SK-N-SH (cell line): ENCODE measurements at regions of chr17 and their contacts with region 1.

Region 1: DNA sequence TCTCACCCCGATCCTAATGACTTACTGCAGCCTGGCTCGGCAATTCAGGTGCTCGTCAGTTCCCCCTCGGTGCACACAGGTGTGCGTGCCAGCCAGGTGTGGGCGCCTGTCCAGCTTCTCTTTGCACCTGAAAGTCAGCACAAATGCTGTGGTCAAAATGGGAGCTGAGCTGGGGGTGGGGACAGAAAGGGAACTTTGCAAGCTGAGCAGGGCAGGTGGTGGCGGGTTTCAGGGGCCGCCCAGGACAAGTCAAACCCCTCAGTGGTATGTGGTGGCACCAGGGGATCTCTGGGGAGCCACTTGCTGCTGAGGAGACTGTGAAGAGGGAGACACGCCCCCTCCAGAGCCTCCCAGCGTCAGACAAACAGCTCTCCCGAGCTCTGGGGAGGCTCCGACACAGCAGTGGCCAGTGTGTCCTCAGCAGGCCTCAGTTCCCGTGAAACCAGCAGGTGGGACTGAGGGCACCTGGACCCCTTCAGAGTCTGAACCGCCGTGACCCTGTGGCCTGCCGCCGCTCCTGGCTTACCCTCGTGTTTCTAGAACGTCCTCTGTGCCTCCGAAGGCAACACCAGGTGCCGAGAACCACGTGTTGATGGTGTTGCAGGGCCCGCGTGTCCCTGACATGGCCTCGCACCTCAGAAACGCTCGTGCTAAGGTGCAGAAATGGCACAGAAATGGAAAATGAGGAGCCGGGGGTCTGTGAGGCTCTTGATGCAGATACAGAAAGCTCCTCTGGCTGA is 233.5 kb upstream of the TNRC6C start:
- DNase-seq: no peak
- H3K4me3 ChIP-seq: no peak overlapping the region
- H3K27ac ChIP-seq: no peak overlapping the region
- H3K4me1 ChIP-seq: peaks cover 0 to 52% of the 10 kb centered on the region in 2 experiments; a peak in 1 of 4 replicates
- H3K27me3 ChIP-seq: peaks cover 8% of the 10 kb centered on the region; the same call in 1 of the 2 replicates
- CTCF ChIP-seq: no peak
- EP300 ChIP-seq: no peak
- RAD21 ChIP-seq: no peak

Region 2: GRCh38 chr17:77690271-77691161 is 34.5 kb before region 1 on chr17:
- CTCF ChIA-PET with region 1: interaction called, 14 read pairs
- POLR2A ChIA-PET with region 1: no interaction called
- DNase-seq: peak; percentile 88
- H3K4me3 ChIP-seq: peak overlapping the region in 1 of 2 experiments; percentile 12; a peak in 1 of 4 replicates
- H3K27ac ChIP-seq: peak overlapping the region in 1 of 2 experiments; percentile 93; a peak in 2 of 4 replicates
- H3K4me1 ChIP-seq: peaks cover 0 to 33% of the 10 kb centered on the region in 2 experiments; a peak in 1 of 4 replicates
- H3K27me3 ChIP-seq: peaks cover 48% of the 10 kb centered on the region; the same call in 1 of the 2 replicates
- CTCF ChIP-seq: no peak
- EP300 ChIP-seq: peak in 1 of 2 experiments; percentile 75; a peak in 2 of 4 replicates
- RAD21 ChIP-seq: peak; percentile 8; the same call in 1 of the 2 replicates

Region 3: GRCh38 chr17:77708936-77709335 is 16.1 kb before region 1 on chr17:
- CTCF ChIA-PET with region 1: interaction called, 15 read pairs
- POLR2A ChIA-PET with region 1: no interaction called
- DNase-seq: no peak
- H3K4me3 ChIP-seq: no peak overlapping the region
- H3K27ac ChIP-seq: no peak overlapping the region
- H3K4me1 ChIP-seq: no peaks in the 10 kb centered on the region
- H3K27me3 ChIP-seq: 0 out of 2 replicates have a peak, but pooled peaks cover 7% of the 10 kb centered on the region
- CTCF ChIP-seq: no peak
- EP300 ChIP-seq: no peak
- RAD21 ChIP-seq: no peak